Activated T-helper 1 cell treated with anti-CD3 and anti-CD28 coated beads, Interleukin-12 subunit alpha, Interleukin-12 subunit beta, Interleukin-2, Interleukin-4 antibody, amounts not matched to agents 30 ng/mL and 10 ng/mL and 1 ng/mL, durations not matched to agents 14 hours and 24 hours and 36 hours (primary cell): ENCODE measurements at regions of chr7 and their contacts with region 1.

Region 1: GRCh38 chr7:121994625-121995410 is 121.9 kb downstream of the PTPRZ1 start:
- DNase-seq: peak; percentile 8
- H3K4me3 Mint-ChIP-seq: no peak overlapping the region
- H3K27ac Mint-ChIP-seq: no peak overlapping the region
- H3K4me1 Mint-ChIP-seq: no peaks in the 10 kb centered on the region
- H3K27me3 Mint-ChIP-seq: no peaks in the 10 kb centered on the region

Region 2: GRCh38 chr7:120792091-120792860 is 1202.5 kb before region 1 on chr7:
- intact Hi-C with region 1: loop called (anchors 2 kb)
- DNase-seq: peak; percentile 28
- H3K4me3 Mint-ChIP-seq: no peak overlapping the region
- H3K27ac Mint-ChIP-seq: no peak overlapping the region
- H3K4me1 Mint-ChIP-seq: no peaks in the 10 kb centered on the region
- H3K27me3 Mint-ChIP-seq: peaks cover 5% of the 10 kb centered on the region

Region 3: GRCh38 chr7:120987683-120988590 is 1006.9 kb before region 1 on chr7:
- intact Hi-C with region 1: loop called (anchors 1 kb)
- DNase-seq: peak; percentile 77
- H3K4me3 Mint-ChIP-seq: peak overlapping the region; percentile 81
- H3K27ac Mint-ChIP-seq: no peak overlapping the region
- H3K4me1 Mint-ChIP-seq: peaks cover 20% of the 10 kb centered on the region
- H3K27me3 Mint-ChIP-seq: peaks cover 53% of the 10 kb centered on the region

Region 4: GRCh38 chr7:121126801-121127534 is 867.9 kb before region 1 on chr7:
- intact Hi-C with region 1: loop called (anchors 1 kb)
- DNase-seq: no peak
- H3K4me3 Mint-ChIP-seq: no peak overlapping the region
- H3K27ac Mint-ChIP-seq: no peak overlapping the region
- H3K4me1 Mint-ChIP-seq: no peaks in the 10 kb centered on the region
- H3K27me3 Mint-ChIP-seq: peaks cover 5% of the 10 kb centered on the region

Region 5: GRCh38 chr7:121366852-121367431 is 627.9 kb before region 1 on chr7:
- intact Hi-C with region 1: loop called (anchors 2 kb)
- DNase-seq: no peak
- H3K4me3 Mint-ChIP-seq: peak overlapping the region; percentile 62
- H3K27ac Mint-ChIP-seq: no peak overlapping the region
- H3K4me1 Mint-ChIP-seq: peaks cover 53% of the 10 kb centered on the region
- H3K27me3 Mint-ChIP-seq: no peaks in the 10 kb centered on the region

Region 6: DNA sequence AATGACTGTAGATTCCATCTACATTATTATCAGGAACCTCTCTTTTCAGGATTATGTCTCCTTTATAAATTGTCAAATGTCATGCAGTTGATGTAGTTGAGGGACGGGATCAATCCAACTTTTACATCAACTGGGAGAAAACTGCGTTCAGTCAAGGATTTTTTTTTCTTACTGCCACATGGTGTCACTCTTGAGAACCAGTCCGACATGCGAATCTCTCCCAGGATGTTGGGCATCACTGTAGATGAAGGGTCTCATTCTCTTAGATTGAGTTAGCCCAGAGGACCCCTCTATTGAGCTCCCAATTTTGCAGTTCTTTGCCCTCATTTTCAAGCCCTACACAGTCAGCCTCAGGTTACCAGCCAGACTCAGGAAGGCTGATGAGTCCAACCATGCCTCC is 242.1 kb before region 1 on chr7:
- intact Hi-C with region 1: loop called (anchors 2 kb)
- DNase-seq: no peak
- H3K4me3 Mint-ChIP-seq: no peak overlapping the region
- H3K27ac Mint-ChIP-seq: no peak overlapping the region
- H3K4me1 Mint-ChIP-seq: no peaks in the 10 kb centered on the region
- H3K27me3 Mint-ChIP-seq: peaks cover 2% of the 10 kb centered on the region

Region 7: GRCh38 chr7:121847041-121847440 is 147.8 kb before region 1 on chr7:
- intact Hi-C with region 1: no loop called
- DNase-seq: no peak
- H3K4me3 Mint-ChIP-seq: no peak overlapping the region
- H3K27ac Mint-ChIP-seq: no peak overlapping the region
- H3K4me1 Mint-ChIP-seq: no peaks in the 10 kb centered on the region
- H3K27me3 Mint-ChIP-seq: no peaks in the 10 kb centered on the region

Region 8: GRCh38 chr7:121882731-121883130 is 112.1 kb before region 1 on chr7:
- intact Hi-C with region 1: no loop called
- DNase-seq: no peak
- H3K4me3 Mint-ChIP-seq: no peak overlapping the region
- H3K27ac Mint-ChIP-seq: no peak overlapping the region
- H3K4me1 Mint-ChIP-seq: no peaks in the 10 kb centered on the region
- H3K27me3 Mint-ChIP-seq: no peaks in the 10 kb centered on the region